AG04450 (cell line): ENCODE measurements at regions of chr3 and their contacts with region 1.

Region 1: GRCh38 chr3:42229942-42230688 is 35.9 kb downstream of the CCK start:
- DNase-seq: peak; percentile 33
- H3K4me3 ChIP-seq: no peak overlapping the region; the same call in 1 of the 2 replicates
- H3K27ac ChIP-seq: no peak overlapping the region
- H3K27me3 ChIP-seq: peaks cover 3% of the 10 kb centered on the region
- CTCF ChIP-seq: peak; percentile 73

Region 2: GRCh38 chr3:42443819-42444436 is 213.8 kb after region 1 on chr3:
- CTCF ChIA-PET with region 1: interaction called, 72 read pairs
- POLR2A ChIA-PET with region 1: no interaction called
- DNase-seq: peak; percentile 38
- H3K4me3 ChIP-seq: no peak overlapping the region
- H3K27ac ChIP-seq: no peak overlapping the region
- H3K27me3 ChIP-seq: peaks cover 18% of the 10 kb centered on the region
- CTCF ChIP-seq: peak; percentile 100

Region 3: GRCh38 chr3:42456211-42456610 is 226.1 kb after region 1 on chr3:
- CTCF ChIA-PET with region 1: interaction called, 10 read pairs
- POLR2A ChIA-PET with region 1: no interaction called
- DNase-seq: no peak
- H3K4me3 ChIP-seq: no peak overlapping the region
- H3K27ac ChIP-seq: no peak overlapping the region
- H3K27me3 ChIP-seq: no peaks in the 10 kb centered on the region
- CTCF ChIP-seq: no peak

Region 4: DNA sequence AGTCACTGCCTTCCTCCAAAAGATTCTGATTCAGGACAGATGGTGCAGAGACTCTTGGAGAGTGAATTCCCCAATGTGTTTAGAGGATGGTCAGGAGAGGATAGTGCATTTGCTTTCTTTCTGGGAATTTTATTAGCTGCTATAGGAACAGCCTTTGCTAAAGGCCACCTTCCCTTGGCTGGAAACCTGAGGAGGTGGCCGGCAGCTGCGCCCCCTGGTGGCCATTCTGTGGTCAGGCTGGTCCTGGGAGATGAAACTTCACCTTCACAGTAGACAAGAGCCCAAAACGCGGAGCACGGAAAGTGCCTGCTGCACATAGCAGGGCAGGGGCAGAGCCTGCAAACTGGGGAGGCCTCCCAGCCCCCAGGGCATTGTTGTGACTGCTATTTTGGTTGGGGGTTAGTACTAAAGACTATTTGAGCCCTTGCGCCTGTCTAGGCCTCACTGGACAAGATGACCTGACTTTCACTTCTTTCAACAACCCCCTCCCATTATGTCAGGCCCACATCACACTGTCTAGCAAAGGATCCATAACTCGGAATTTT is 317.4 kb after region 1 on chr3:
- CTCF ChIA-PET with region 1: interaction called, 26 read pairs
- POLR2A ChIA-PET with region 1: no interaction called
- DNase-seq: peak; percentile 13
- H3K4me3 ChIP-seq: no peak overlapping the region
- H3K27ac ChIP-seq: no peak overlapping the region
- H3K27me3 ChIP-seq: peaks cover 4% of the 10 kb centered on the region
- CTCF ChIP-seq: peak; percentile 94